Activated CD8-positive, alpha-beta T cell treated with anti-CD3 and anti-CD28 coated beads for 36 hours (primary cell): ENCODE measurements at regions of chr5 and their contacts with region 1.

Region 1: GRCh38 chr5:172984243-172984953 is 827 bp downstream of the ATP6V0E1 start:
- DNase-seq: peak; percentile 92
- ATAC-seq: peak; percentile 80
- H3K4me3 Mint-ChIP-seq: peak overlapping the region; percentile 91
- H3K27ac Mint-ChIP-seq: peak overlapping the region; percentile 98
- H3K4me1 Mint-ChIP-seq: peaks cover 32% of the 10 kb centered on the region
- H3K27me3 Mint-ChIP-seq: no peaks in the 10 kb centered on the region
- CTCF ChIP-seq: peak; percentile 53

Region 2: DNA sequence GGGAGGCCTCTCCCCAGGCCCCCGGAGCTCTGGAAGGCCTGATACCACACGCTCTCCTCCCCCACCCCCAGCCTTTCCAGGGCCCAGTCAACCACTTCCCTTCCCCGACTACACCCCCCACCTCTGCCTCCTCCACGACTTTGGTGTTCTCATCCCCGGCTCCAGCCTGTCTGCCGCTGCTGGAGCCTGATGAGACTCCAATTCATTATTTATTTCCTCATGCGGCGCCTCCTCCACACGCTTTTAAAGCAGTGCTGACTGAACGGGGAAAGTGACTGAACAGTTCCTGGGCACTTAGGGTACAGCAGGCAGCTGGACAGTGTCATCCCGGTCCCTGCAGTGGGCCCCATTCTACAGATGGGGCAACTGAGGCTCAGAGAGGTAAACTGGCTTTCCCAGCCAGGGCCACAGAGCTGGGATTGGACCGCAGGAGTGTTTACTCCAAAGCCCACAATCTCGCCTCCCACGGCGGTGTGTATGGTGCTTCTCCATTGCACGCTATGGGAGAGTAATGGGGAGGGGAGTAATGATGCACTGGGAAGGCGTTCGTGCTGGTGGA is 41.0 kb before region 1 on chr5:
- CTCF ChIA-PET with region 1: no interaction called
- POLR2A ChIA-PET with region 1: no interaction called
- intact Hi-C with region 1: no loop called
- DNase-seq: no peak
- ATAC-seq: no peak
- H3K4me3 Mint-ChIP-seq: no peak overlapping the region
- H3K27ac Mint-ChIP-seq: no peak overlapping the region
- H3K4me1 Mint-ChIP-seq: no peaks in the 10 kb centered on the region
- H3K27me3 Mint-ChIP-seq: no peaks in the 10 kb centered on the region
- CTCF ChIP-seq: no peak

Region 3: DNA sequence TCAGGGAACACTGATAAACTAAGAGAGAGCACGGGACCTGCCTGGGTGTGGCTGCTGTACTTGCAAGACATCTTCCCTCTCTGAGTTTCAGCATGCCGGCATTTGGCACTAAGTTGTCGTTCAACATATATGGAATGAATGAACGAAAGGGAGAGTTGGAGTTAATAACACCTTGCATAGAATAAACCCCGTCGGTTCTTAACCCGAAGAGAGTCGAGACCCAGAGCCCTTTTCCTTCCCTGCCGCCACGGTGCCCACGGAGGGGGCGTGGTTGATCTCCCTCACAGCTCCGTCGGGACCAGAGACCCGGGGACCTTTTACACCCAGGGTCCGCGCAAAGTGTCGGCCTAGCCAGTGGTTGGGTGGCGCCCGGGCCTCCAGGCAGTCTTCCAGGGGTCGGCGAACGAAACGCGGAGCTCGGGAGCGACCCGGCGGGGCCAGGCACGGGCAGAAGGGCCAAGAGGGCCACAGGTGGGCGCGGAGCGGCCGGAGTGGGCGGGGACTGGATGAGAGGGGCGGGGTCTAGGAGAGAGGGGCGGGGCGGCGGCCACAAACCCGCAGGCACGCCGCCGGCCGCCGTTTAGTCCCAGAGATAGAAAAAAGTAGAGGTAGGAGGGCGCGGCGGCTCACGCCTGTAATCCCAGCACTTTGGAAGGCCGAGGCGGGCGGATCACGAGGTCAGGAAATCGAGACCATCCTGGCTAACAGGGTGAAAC is 25.9 kb before region 1 on chr5:
- CTCF ChIA-PET with region 1: interaction called, 13 read pairs
- POLR2A ChIA-PET with region 1: interaction called, 14 read pairs
- intact Hi-C with region 1: no loop called
- DNase-seq: peak; percentile 71
- ATAC-seq: peak; percentile 81
- H3K4me3 Mint-ChIP-seq: peak overlapping the region; percentile 100
- H3K27ac Mint-ChIP-seq: peak overlapping the region; percentile 96
- H3K4me1 Mint-ChIP-seq: peaks cover 34% of the 10 kb centered on the region
- H3K27me3 Mint-ChIP-seq: no peaks in the 10 kb centered on the region
- CTCF ChIP-seq: no peak

Region 4: DNA sequence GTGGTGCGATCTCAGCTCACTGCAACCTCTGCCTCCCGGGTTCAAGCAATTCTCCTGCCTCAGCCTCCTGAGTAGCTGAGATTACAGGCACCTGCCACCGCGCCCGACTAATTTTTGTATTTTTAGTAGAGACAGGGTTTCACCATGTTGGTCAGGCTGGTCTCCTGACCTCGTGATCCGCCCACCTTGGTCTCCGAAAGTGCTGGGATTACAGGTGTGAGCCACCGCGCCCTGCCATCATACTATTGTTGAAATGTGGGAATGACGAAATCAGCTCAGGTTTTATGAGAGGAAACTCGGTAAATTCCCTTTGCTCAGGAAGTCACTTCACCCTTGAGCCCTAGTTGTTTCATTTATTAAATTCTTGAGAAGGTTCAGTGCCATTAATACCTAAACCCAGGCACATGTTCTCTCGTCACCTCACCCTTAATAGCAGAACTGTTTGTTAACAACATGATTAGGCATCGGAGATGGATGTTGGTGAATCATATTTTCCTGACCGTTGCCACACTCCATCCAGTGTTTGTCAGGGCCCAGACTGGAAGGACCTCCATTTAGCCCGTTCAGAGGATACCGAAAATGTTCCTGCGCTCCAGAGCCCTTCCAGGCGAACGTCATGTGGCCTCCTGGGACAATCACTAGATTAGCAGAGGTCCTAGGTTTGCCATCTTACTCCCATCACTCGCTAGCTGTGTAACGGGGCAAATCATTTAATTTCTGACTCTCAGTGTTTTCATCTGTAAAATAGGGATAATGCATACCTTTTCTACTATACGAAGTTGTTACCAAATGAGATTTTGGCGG is 51.7 kb after region 1 on chr5:
- CTCF ChIA-PET with region 1: interaction called, 12 read pairs
- POLR2A ChIA-PET with region 1: interaction called, 16 read pairs
- intact Hi-C with region 1: no loop called
- DNase-seq: peak; percentile 37
- ATAC-seq: no peak
- H3K4me3 Mint-ChIP-seq: peak overlapping the region; percentile 69
- H3K27ac Mint-ChIP-seq: peak overlapping the region; percentile 91
- H3K4me1 Mint-ChIP-seq: peaks cover 55% of the 10 kb centered on the region
- H3K27me3 Mint-ChIP-seq: no peaks in the 10 kb centered on the region
- CTCF ChIP-seq: no peak

Region 5: DNA sequence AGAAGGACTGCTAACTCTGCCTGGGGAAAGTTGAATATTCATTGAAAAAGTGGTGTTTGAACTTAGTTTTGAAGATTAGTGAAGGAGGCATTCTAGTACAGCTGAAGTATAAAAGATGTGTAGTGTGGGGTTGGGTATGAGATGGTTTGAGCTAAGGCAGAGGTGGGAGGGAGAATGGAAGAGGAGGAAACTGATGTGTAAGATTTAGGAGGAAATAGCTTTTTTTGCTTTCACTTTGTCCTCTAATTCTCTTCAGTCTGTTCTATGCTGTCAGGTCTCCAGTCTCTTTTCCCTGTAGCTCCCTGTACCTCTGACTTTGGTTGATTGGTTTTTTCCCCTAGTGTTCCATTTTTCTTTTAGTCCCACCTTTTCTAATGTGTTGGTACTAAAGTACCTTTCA is 80.8 kb after region 1 on chr5:
- CTCF ChIA-PET with region 1: interaction called, 37 read pairs
- POLR2A ChIA-PET with region 1: interaction called, 11 read pairs
- intact Hi-C with region 1: no loop called
- DNase-seq: no peak
- ATAC-seq: peak; percentile 80
- H3K4me3 Mint-ChIP-seq: peak overlapping the region; percentile 67
- H3K27ac Mint-ChIP-seq: peak overlapping the region; percentile 87
- H3K4me1 Mint-ChIP-seq: peaks cover 72% of the 10 kb centered on the region
- H3K27me3 Mint-ChIP-seq: no peaks in the 10 kb centered on the region
- CTCF ChIP-seq: no peak

Region 6: GRCh38 chr5:173204185-173204979 is 220.0 kb after region 1 on chr5:
- CTCF ChIA-PET with region 1: interaction called, 3 read pairs
- POLR2A ChIA-PET with region 1: no interaction called
- intact Hi-C with region 1: loop called (anchors 5 kb)
- DNase-seq: peak; percentile 38
- ATAC-seq: peak; percentile 64
- H3K4me3 Mint-ChIP-seq: no peak overlapping the region
- H3K27ac Mint-ChIP-seq: no peak overlapping the region
- H3K4me1 Mint-ChIP-seq: no peaks in the 10 kb centered on the region
- H3K27me3 Mint-ChIP-seq: peaks cover 27% of the 10 kb centered on the region
- CTCF ChIP-seq: peak; percentile 66